Activated CD8-positive, alpha-beta T cell treated with anti-CD3 and anti-CD28 coated beads, Interleukin-2, amount 10 ng/mL, durations not matched to agents 7 days and 5 days (primary cell): ENCODE measurements at regions of chr22 and their contacts with region 1.

Region 1: DNA sequence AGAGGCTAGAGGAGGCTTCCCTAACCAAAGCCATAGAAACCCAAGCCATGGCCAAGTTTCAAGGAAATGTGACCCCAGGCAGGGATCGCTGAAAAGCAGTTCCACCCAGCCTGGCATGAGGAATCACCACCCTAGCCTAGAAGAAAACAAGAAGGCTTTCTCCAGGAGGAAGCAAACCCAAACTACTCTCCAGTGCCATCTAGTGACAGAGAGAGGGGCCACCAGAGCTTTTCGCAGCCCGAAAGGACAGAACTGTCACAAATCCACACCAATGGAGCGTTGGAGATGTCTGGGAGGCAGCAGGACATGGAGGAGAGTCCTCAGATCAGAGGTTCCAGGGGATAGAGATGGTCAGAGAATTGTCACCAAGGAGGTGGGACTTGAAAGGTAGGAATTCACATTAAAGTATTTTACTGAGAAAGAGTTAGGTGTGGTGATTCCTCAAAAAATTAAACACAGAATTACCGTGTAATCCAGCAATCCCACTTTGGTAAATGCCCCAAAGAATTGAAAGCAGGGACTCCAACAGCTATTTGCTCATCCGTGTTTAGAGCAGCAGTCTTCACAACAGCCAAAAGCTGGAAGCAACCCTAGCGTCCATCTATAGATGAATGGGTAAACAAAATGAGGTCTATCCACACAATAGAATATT is 67.3 kb upstream of the NUP50 start:
- DNase-seq: peak; percentile 61
- ATAC-seq: peak; percentile 60
- H3K4me3 Mint-ChIP-seq: no peak overlapping the region
- H3K27ac Mint-ChIP-seq: no peak overlapping the region
- H3K4me1 Mint-ChIP-seq: no peaks in the 10 kb centered on the region
- H3K27me3 Mint-ChIP-seq: peaks cover 12% of the 10 kb centered on the region

Region 2: GRCh38 chr22:44819971-44820631 is 276.3 kb before region 1 on chr22:
- CTCF ChIA-PET with region 1: interaction called, 10 read pairs
- POLR2A ChIA-PET with region 1: no interaction called
- DNase-seq: no peak
- ATAC-seq: no peak
- H3K4me3 Mint-ChIP-seq: no peak overlapping the region
- H3K27ac Mint-ChIP-seq: no peak overlapping the region
- H3K4me1 Mint-ChIP-seq: no peaks in the 10 kb centered on the region
- H3K27me3 Mint-ChIP-seq: no peaks in the 10 kb centered on the region

Region 3: GRCh38 chr22:45125188-45125587 is 28.8 kb after region 1 on chr22:
- CTCF ChIA-PET with region 1: no interaction called
- POLR2A ChIA-PET with region 1: no interaction called
- DNase-seq: no peak
- ATAC-seq: no peak
- H3K4me3 Mint-ChIP-seq: no peak overlapping the region
- H3K27ac Mint-ChIP-seq: no peak overlapping the region
- H3K4me1 Mint-ChIP-seq: peaks cover 14% of the 10 kb centered on the region
- H3K27me3 Mint-ChIP-seq: peaks cover 7% of the 10 kb centered on the region